ENCODE measurements at regions of chr15 and their contacts with region 1.

Region 1: GRCh38 chr15:30991255-30992072 is at the start of gene MTMR10:
- DNase-seq: peak; percentile 76
- H3K4me3 ChIP-seq: peak within 1 kb of the TSS; percentile 86 to 90 (median 87)
- H3K27ac ChIP-seq: peak within 1 kb of the TSS; percentile 70
- H3K4me1 ChIP-seq: no peaks in the 10 kb centered on the region
- H3K27me3 ChIP-seq: no peaks in the 10 kb centered on the region
- CTCF ChIP-seq: peak in 1 of 2 donors; percentile 10
- total RNA-seq, gene MTMR10: 15.8 to 17.9 TPM

Region 2: GRCh38 chr15:30903497-30904201 is 87.8 kb before region 1 on chr15 and contains the start of gene FAN1:
- CTCF ChIA-PET with region 1: no interaction called
- dilution Hi-C with region 1: no loop called
- in situ Hi-C with region 1: no loop called
- intact Hi-C with region 1: loop called (anchors 1 kb)
- DNase-seq: peak; percentile 85
- H3K4me3 ChIP-seq: peak within 1 kb of the TSS; percentile 90 to 94 (median 92)
- H3K27ac ChIP-seq: peak within 1 kb of the TSS; percentile 34
- H3K4me1 ChIP-seq: peaks cover 7% of the 10 kb centered on the region
- H3K27me3 ChIP-seq: no peaks in the 10 kb centered on the region
- CTCF ChIP-seq: no peak
- total RNA-seq, gene FAN1: 21.5 to 23.8 TPM

Region 3: GRCh38 chr15:31010036-31010435 is 18.6 kb after region 1 on chr15:
- CTCF ChIA-PET with region 1: no interaction called
- dilution Hi-C with region 1: no loop called
- in situ Hi-C with region 1: no loop called
- intact Hi-C with region 1: loop called (anchors 2 kb)
- DNase-seq: peak; percentile 55
- H3K4me3 ChIP-seq: no peak overlapping the region
- H3K27ac ChIP-seq: no peak overlapping the region
- H3K4me1 ChIP-seq: peaks cover 6% of the 10 kb centered on the region
- H3K27me3 ChIP-seq: no peaks in the 10 kb centered on the region
- CTCF ChIP-seq: no peak

Region 4: DNA sequence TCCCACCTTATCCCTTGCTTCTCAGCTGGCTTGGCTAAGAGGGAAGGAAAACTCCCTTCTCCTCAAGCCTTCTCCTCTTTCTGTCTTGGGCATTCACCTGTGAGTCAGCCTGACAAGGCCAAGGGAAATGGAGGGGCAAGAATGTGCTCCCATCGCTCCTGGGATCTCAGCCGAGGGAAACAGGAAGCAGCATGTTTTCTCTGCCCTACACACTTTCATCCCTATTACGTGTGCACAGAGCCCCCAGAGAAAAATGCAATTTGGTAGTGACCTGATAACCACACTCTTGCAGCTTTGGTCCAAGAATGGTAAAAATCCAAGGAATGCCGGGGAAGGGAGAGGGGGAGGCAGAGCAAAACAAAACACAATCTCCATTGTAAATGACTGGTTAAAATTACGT is 32.9 kb after region 1 on chr15:
- CTCF ChIA-PET with region 1: no interaction called
- dilution Hi-C with region 1: no loop called
- in situ Hi-C with region 1: no loop called
- intact Hi-C with region 1: loop called (anchors 2 kb)
- DNase-seq: peak; percentile 91
- H3K4me3 ChIP-seq: peak overlapping the region in 1 of 3 experiments; percentile 4
- H3K27ac ChIP-seq: peak overlapping the region; percentile 93
- H3K4me1 ChIP-seq: peaks cover 30% of the 10 kb centered on the region
- H3K27me3 ChIP-seq: no peaks in the 10 kb centered on the region
- CTCF ChIP-seq: no peak

Region 5: GRCh38 chr15:31080591-31081014 is 89.1 kb after region 1 on chr15:
- CTCF ChIA-PET with region 1: no interaction called
- dilution Hi-C with region 1: no loop called
- in situ Hi-C with region 1: loop called in 1 of 2 experiments (anchors 25 kb)
- intact Hi-C with region 1: loop called (anchors 10 kb)
- DNase-seq: no peak
- H3K4me3 ChIP-seq: no peak overlapping the region
- H3K27ac ChIP-seq: no peak overlapping the region
- H3K4me1 ChIP-seq: peaks cover 4% of the 10 kb centered on the region
- H3K27me3 ChIP-seq: no peaks in the 10 kb centered on the region
- CTCF ChIP-seq: no peak